Heart left ventricle (tissue), 16 donors: ENCODE measurements at regions of chr1 and their contacts with region 1.

Region 1: GRCh38 chr1:203304919-203305808 is at the start of gene BTG2:
- DNase-seq: peak; percentile 95 to 97 (median 96)
- ATAC-seq: peak; percentile 77 to 93 (median 90)
- H3K4me3 ChIP-seq: peak within 1 kb of the TSS; percentile 58 to 100 (median 91)
- H3K27ac ChIP-seq: peak within 1 kb of the TSS; percentile 92 to 100 (median 98)
- H3K4me1 ChIP-seq: peaks cover 5 to 52% (median 35%) of the 10 kb centered on the region in 12 donors
- H3K27me3 ChIP-seq: no peaks in the 10 kb centered on the region
- CTCF ChIP-seq: no peak
- POLR2A ChIP-seq: peak; percentile 99 to 100
- total RNA-seq, gene BTG2: 28.0 to 174 (median 42.1) TPM

Region 2: GRCh38 chr1:203287109-203287893 is 17.9 kb before region 1 on chr1:
- intact Hi-C with region 1: loop called in 1 of 10 experiments (anchors 1 kb)
- DNase-seq: peak; percentile 67 to 82 (median 79)
- ATAC-seq: peak; percentile 26 to 67 (median 42)
- H3K4me3 ChIP-seq: peak overlapping the region in 1 of 12 donors; percentile 15
- H3K27ac ChIP-seq: peak overlapping the region; percentile 15 to 98 (median 88)
- H3K4me1 ChIP-seq: peaks cover 29 to 89% (median 70%) of the 10 kb centered on the region in 12 donors
- H3K27me3 ChIP-seq: no peaks in the 10 kb centered on the region
- CTCF ChIP-seq: no peak
- POLR2A ChIP-seq: no peak

Region 3: DNA sequence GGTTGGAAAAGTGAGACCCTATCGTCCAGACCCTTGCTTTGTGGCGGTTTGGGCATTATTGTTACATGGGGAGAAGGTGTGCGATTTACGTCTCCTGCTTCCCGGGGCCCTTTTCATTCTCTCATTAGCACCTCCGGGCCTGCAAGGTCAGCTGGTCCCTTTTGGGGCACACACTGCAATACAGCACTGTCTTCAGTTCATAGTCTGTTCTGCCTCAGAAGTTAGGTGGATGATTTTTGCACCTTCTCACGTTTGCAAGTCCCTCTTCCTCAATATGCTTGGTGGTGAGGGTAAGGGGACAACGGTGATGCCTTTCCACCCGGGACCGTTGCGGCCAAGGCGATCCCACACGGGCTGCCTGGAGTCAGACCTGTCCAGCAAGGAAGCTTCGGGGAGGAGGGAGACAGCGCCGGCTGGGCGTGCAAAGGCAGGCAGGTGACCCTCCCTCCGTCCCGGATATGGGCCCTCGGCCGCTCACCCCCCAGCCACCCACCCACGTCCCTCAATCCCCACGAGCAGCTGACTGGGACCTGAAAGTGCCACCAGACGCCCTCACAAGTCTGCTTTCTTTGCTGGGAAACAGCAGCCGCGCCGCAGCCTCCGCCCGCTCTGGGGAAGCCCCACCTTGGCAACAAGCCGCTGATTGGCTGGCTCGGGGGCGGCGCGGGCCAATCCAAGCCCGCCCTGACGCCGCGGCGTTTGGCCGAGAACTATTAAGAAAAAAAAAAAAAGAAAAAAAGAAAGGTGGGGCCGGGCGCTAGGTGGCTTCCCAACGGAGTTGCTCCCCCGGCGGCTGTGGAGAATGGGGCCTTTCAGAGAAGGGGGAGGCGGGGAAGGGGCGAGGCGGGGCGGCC is 21.9 kb after region 1 on chr1:
- intact Hi-C with region 1: loop called in 4 of 10 experiments (anchors 1 to 2 kb)
- DNase-seq: peak; percentile 95 to 98 (median 96)
- ATAC-seq: peak; percentile 89 to 92 (median 90)
- H3K4me3 ChIP-seq: peak overlapping the region in 11 of 12 donors; percentile 14 to 69 (median 61)
- H3K27ac ChIP-seq: peak overlapping the region; percentile 86 to 99 (median 94)
- H3K4me1 ChIP-seq: peaks cover 4 to 66% (median 57%) of the 10 kb centered on the region in 12 donors
- H3K27me3 ChIP-seq: no peaks in the 10 kb centered on the region
- CTCF ChIP-seq: no peak
- POLR2A ChIP-seq: peak; percentile 53 to 83

Region 4: GRCh38 chr1:203549309-203549708 is 244.1 kb after region 1 on chr1:
- intact Hi-C with region 1: no loop called
- DNase-seq: no peak
- ATAC-seq: no peak
- H3K4me3 ChIP-seq: no peak overlapping the region
- H3K27ac ChIP-seq: peak overlapping the region in 1 of 12 donors; percentile 27
- H3K4me1 ChIP-seq: peaks cover 0 to 44% (median 7%) of the 10 kb centered on the region in 12 donors
- H3K27me3 ChIP-seq: no peaks in the 10 kb centered on the region
- CTCF ChIP-seq: no peak
- POLR2A ChIP-seq: no peak